ENCODE measurements at regions of chr16 and their contacts with region 1.

Region 1: DNA sequence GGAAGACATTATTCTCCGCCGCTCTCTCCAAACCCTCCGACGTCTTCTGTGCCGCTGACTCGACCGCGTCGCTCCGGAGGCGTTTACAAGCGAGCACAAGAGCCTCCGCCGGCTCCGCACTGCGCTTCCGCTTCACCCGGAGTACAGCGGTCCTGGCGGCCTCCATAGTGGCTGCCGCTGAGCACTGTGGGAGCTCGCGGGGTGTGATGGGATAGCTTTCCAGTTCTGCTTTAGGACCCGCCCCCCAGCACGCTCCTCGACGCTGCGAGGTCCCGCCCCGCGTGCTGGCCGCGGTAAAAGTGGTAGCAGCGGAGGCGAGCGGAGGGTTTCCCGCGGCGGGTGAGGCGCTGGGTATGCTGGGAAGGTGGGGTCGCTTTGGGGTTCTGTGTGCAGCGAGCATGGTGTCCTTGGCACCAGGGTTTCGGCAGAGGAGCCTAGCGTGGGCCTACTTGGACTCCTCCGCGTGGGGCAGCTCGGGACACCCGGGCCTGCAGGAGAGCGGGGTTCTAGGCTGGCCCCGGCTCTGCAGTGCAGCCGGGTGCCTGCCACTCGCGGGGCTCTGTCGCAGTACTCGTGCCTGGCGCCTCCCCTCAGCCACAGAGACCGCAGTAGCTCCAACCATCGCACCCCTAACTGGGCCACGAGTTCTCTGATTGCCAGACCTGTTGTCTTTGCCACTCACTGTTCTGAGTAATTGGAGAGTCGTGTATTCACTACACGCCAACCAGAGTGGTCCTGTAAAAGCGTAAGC is at the starts of genes PRMT7 and SLC7A6OS:
- DNase-seq: peak; percentile 94
- ATAC-seq: peak; percentile 100
- total RNA-seq, gene PRMT7: 30.9 TPM
- total RNA-seq, gene SLC7A6OS: 14.2 TPM

Region 2: GRCh38 chr16:68264128-68265077 is 46.5 kb before region 1 on chr16 and contains the start of gene SLC7A6:
- intact Hi-C with region 1: loop called (anchors 5 kb)
- DNase-seq: peak; percentile 89
- ATAC-seq: peak; percentile 79
- total RNA-seq, gene SLC7A6: 38.2 TPM

Region 3: GRCh38 chr16:68417711-68418301 is 106.9 kb after region 1 on chr16:
- intact Hi-C with region 1: no loop called
- DNase-seq: no peak
- ATAC-seq: no peak

Measured in left ventricle myocardium superior (tissue), 1 donor.